ENCODE measurements at regions of chr5 and their contacts with region 1.

Region 1: DNA sequence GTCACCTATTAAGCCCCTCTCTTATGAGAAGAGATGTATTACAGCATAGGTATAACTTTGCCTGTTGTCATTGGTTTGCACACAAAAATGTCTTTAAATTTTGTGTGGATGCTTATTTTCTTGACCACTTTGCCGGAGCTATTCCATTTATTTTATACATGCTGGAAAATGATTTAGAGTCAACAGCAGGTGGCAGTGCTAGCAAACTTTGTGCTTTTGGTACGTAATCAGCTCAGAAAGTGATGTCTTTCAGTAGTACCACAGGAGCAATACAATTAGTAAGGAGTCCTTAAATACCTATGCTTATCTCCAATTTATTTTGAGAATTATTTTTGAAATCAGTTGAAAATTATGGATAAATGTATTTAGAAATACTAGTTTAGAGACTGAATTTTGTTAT is 19.8 kb upstream of the NUDT12 start:
- DNase-seq: no peak
- H3K4me3 ChIP-seq: no peak overlapping the region
- CTCF ChIP-seq: peak; percentile 36

Region 2: GRCh38 chr5:102975457-102976182 is 606.7 kb before region 1 on chr5:
- CTCF ChIA-PET with region 1: no interaction called
- POLR2A ChIA-PET with region 1: no interaction called
- DNase-seq: peak; percentile 47
- H3K4me3 ChIP-seq: no peak overlapping the region
- CTCF ChIP-seq: no peak

Region 3: DNA sequence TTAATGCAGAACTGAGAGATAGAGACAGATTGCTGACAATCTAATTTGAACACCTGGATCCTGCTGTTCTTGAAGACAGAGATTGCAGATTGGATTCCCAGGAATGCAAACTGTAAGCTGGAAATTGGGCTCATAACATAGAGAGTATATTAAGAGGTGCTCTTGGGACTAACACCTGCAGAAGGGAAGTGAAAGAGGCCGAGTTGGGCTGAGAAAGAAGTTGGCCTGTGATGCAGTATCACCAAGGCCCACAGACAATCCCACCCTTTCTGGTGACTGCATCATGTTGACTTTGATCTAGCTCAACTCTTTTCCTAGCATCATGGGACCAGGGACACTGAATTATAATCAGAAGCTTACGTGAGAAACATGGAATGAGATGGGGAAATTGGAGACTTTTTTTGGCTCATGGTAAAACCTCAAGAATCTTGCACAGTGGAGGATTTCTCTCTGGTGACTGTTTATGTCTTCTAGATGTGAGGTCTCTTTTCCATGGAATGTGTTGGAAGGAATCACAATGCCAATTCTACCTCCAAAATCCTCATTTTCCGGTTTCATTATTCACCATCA is 16.7 kb after region 1 on chr5:
- CTCF ChIA-PET with region 1: interaction called, 12 read pairs
- POLR2A ChIA-PET with region 1: no interaction called
- DNase-seq: no peak
- H3K4me3 ChIP-seq: no peak overlapping the region
- CTCF ChIP-seq: no peak

Region 4: GRCh38 chr5:103847060-103847459 is 264.7 kb after region 1 on chr5:
- CTCF ChIA-PET with region 1: no interaction called
- POLR2A ChIA-PET with region 1: no interaction called
- DNase-seq: no peak
- H3K4me3 ChIP-seq: no peak overlapping the region
- CTCF ChIP-seq: no peak

Region 5: DNA sequence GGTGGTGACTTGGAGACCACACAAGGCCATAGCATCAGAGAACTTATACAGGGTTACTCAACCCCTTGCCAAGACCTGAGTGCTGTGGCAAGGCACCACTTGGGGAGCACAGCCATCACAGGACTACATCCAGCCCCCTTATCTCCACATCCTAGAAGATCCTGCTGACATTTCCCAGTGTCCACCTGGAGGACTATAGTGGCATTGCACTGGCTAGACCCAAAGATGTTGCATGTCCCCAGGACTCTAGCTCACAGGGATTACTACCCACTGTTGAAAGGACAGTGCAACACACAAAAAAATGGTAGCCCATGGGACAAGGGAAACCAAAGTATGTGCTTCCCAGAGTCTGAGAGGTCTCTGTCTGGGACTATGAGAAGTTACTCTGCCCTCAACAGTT is 391.3 kb after region 1 on chr5:
- CTCF ChIA-PET with region 1: no interaction called
- POLR2A ChIA-PET with region 1: no interaction called
- DNase-seq: no peak
- H3K4me3 ChIP-seq: no peak overlapping the region
- CTCF ChIP-seq: peak; percentile 7

Region 6: GRCh38 chr5:104412649-104413246 is 830.4 kb after region 1 on chr5:
- CTCF ChIA-PET with region 1: interaction called, 21 read pairs
- POLR2A ChIA-PET with region 1: no interaction called
- DNase-seq: peak; percentile 10
- H3K4me3 ChIP-seq: no peak overlapping the region
- CTCF ChIP-seq: peak; percentile 73